Panc1 (cell line): ENCODE measurements at regions of chr3 and their contacts with region 1.

Region 1: GRCh38 chr3:13895155-13896105 is 15.6 kb upstream of the WNT7A start:
- DNase-seq: peak; percentile 61
- ATAC-seq: peak; percentile 99
- H3K4me3 ChIP-seq: peak overlapping the region; percentile 55 to 56
- H3K27ac ChIP-seq: peak overlapping the region; percentile 34; the same call in 1 of the 2 replicates
- H3K4me1 ChIP-seq: 0 out of 2 replicates have a peak, but pooled peaks cover 6% of the 10 kb centered on the region
- H3K27me3 ChIP-seq: no peaks in the 10 kb centered on the region
- CTCF ChIP-seq: no peak

Region 2: GRCh38 chr3:13824521-13825310 is 70.7 kb before region 1 on chr3:
- CTCF ChIA-PET with region 1: no interaction called
- POLR2A ChIA-PET with region 1: no interaction called
- in situ Hi-C with region 1: no loop called
- intact Hi-C with region 1: no loop called
- DNase-seq: no peak
- ATAC-seq: no peak
- H3K4me3 ChIP-seq: no peak overlapping the region
- H3K27ac ChIP-seq: no peak overlapping the region
- H3K4me1 ChIP-seq: no peaks in the 10 kb centered on the region
- H3K27me3 ChIP-seq: no peaks in the 10 kb centered on the region; the same call in 1 of the 2 replicates
- CTCF ChIP-seq: no peak

Region 3: DNA sequence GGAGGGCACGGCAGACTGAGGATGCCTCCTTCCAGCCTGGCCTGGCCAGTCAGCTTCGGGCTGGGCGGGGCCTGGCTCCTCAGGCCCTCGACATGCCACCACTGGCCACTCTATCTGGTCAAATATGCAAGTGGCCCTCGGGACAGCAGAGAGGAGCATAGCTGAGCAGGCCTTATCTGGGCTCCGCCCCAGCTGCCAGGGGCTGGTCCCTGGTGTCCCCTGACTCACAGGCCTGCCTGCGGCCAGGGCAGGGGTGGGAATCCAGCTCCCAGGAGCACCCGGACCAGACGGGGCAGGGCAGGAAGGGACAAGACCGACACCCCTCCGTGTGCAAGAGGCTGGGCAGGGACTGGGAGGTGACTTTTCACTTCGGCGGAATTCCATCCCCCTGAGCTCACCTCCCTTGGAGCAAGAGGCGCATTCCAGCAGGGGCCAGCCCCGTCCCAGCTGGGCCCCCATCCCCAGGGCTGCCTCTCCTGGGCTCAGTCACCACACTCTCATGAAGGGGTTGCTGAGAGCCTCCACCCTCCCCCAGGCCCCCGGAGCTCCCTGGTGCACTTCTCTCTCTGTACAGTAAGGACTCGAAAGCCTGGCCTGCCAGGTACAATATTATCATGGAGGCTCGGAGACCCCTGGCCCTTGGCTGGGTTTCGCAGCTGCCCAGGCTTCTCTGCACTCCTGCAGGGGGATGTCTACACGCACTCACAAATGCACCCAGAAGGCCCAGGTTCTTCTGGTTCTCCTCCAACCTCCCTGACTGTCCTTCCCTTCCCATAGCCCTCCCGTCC is 45.1 kb before region 1 on chr3:
- CTCF ChIA-PET with region 1: no interaction called
- POLR2A ChIA-PET with region 1: no interaction called
- in situ Hi-C with region 1: no loop called
- intact Hi-C with region 1: no loop called
- DNase-seq: no peak
- ATAC-seq: 0 out of 2 replicates have a peak, but pooled peaks have one; percentile 34
- H3K4me3 ChIP-seq: no peak overlapping the region
- H3K27ac ChIP-seq: no peak overlapping the region
- H3K4me1 ChIP-seq: no peaks in the 10 kb centered on the region
- H3K27me3 ChIP-seq: no peaks in the 10 kb centered on the region
- CTCF ChIP-seq: no peak

Region 4: GRCh38 chr3:13950042-13950441 is 54.6 kb after region 1 on chr3:
- CTCF ChIA-PET with region 1: no interaction called
- POLR2A ChIA-PET with region 1: interaction called, 11 read pairs
- in situ Hi-C with region 1: no loop called
- intact Hi-C with region 1: no loop called
- DNase-seq: no peak
- ATAC-seq: no peak
- H3K4me3 ChIP-seq: no peak overlapping the region
- H3K27ac ChIP-seq: no peak overlapping the region
- H3K4me1 ChIP-seq: no peaks in the 10 kb centered on the region
- H3K27me3 ChIP-seq: peaks cover 4% of the 10 kb centered on the region; the same call in 1 of the 2 replicates
- CTCF ChIP-seq: no peak